ENCODE measurements at regions of chr6 and their contacts with region 1.

Region 1: GRCh38 chr6:134123666-134124208 is 71.3 kb upstream of the SLC2A12 start:
- DNase-seq: peak; percentile 75
- H3K4me3 ChIP-seq: no peak overlapping the region
- H3K27ac ChIP-seq: no peak overlapping the region
- H3K27me3 ChIP-seq: no peaks in the 10 kb centered on the region
- CTCF ChIP-seq: peak; percentile 63

Region 2: DNA sequence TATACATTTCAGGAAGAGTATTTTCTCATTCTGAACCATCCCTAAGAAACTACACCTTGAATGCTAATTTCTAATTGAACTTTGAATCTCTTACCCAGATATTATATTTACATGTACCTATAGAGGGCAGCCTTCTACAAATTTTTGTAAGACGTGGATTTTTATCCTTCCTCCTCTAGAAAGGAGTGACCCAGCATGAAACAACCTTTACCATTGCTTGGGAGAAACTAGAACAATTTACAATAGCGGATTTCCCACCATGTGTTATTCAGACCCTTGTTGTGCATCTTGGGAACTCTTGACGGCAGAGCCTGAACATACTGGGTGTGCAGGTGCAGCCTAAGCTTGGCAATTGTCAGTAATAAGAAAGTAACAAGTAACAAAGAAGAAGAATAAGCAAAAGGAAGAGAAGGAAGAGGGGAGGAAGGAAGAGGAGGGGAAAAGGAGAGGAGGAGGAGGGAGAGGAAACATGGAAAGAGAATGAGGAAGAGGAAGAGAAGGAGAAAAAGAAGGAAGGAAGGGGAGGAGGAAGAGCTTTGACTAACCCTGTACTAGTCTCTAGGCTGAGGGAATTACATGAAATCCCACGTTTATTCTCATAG is 1453.9 kb before region 1 on chr6:
- CTCF ChIA-PET with region 1: no interaction called
- POLR2A ChIA-PET with region 1: no interaction called
- DNase-seq: no peak
- H3K4me3 ChIP-seq: no peak overlapping the region
- H3K27ac ChIP-seq: no peak overlapping the region
- H3K27me3 ChIP-seq: no peaks in the 10 kb centered on the region
- CTCF ChIP-seq: peak; percentile 58

Region 3: GRCh38 chr6:133837801-133838349 is 285.9 kb before region 1 on chr6:
- CTCF ChIA-PET with region 1: no interaction called
- POLR2A ChIA-PET with region 1: no interaction called
- DNase-seq: no peak
- H3K4me3 ChIP-seq: no peak overlapping the region
- H3K27ac ChIP-seq: no peak overlapping the region
- H3K27me3 ChIP-seq: no peaks in the 10 kb centered on the region
- CTCF ChIP-seq: peak; percentile 41

Region 4: DNA sequence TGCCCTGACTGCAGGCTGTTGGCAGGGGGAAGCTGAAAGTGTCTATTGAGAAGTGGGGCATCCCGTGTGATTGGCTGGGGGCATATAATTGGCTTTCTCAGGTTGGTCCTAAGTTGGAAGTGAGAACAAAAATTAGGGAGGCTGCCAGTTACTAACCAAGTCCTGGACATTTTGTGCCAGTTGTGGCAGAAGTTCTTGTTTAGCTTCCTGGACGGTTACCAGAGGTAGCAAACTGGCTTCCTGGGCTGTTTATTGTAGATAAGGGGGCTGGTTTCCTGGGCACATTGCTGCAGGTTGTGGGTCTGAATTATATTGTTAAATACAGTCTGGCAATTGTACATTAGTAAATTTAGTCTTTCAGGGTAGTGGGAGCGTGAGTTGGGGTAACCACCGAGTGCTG is 20.7 kb before region 1 on chr6:
- CTCF ChIA-PET with region 1: interaction called, 70 read pairs
- POLR2A ChIA-PET with region 1: no interaction called
- DNase-seq: no peak
- H3K4me3 ChIP-seq: no peak overlapping the region
- H3K27ac ChIP-seq: no peak overlapping the region
- H3K27me3 ChIP-seq: no peaks in the 10 kb centered on the region
- CTCF ChIP-seq: no peak

Region 5: DNA sequence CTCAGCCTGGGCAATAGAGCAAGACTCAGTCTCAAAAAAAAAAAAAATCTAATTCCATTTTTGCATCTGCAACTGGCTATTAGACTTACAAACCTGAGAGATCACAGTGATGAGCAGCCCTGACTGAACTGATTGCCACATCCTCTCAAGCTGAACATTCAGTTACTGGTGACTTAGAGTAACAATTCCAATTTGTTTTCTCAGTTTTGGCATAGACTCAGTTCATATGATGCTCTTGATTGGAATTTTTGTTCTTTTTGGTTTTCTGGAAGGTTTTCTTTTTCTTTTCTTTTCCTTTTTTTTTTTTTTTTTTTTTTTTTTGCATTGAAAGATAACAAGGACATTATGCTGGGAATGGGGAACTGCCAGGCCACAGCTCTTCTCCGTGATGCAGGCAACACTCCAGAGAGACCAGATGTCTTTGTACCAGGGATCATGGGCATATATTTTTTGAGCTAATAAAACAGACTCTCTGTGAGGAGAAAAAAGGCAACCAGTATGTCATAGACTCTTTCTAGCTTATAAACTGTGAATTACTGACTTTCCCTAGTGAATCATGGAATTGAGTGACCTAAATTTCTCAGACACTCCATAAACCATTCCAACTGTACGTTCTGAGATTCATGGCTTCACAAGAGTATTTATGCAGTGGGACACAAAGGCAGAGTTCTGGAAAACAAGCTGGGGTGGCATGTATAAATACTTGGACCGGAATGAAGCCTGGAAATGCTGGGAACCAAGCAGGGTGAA is 14.7 kb after region 1 on chr6:
- CTCF ChIA-PET with region 1: interaction called, 52 read pairs
- POLR2A ChIA-PET with region 1: no interaction called
- DNase-seq: no peak
- H3K4me3 ChIP-seq: no peak overlapping the region
- H3K27ac ChIP-seq: peak overlapping the region; percentile 11
- H3K27me3 ChIP-seq: no peaks in the 10 kb centered on the region
- CTCF ChIP-seq: no peak

Region 6: DNA sequence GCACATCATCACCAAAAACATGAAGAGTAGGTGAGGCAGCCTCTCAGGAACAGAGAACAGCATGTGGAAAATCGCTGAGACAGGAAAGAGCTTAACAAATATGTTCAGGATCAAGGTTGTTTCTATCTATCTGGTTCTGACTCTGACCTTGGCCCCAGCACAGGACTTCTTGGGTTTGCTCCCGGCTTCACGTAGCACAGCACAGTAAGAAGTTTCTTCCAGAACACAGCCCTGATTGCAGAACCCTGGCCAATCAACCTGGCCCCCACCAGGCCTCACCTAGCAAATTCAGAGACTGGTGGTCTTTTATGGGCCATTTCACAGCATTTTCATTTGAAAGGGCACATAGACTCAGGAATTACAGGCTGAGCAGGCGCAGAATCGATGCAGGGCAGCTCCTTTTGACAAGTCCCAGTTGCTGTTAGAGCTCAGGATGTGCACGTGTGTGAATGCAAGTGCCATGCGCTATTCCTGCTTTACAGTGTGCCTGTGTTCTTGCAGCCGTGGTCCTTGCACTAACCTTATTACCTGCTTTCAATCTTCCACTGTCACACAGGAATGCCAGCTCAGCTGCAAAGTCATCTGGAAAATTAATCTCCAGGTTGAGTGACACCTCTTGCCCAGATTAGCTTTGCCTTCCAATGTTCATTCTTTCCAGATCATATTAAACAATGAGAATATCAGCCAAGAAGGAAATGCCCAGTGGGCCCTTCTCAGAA is 29.2 kb after region 1 on chr6:
- CTCF ChIA-PET with region 1: interaction called, 13 read pairs
- POLR2A ChIA-PET with region 1: no interaction called
- DNase-seq: no peak
- H3K4me3 ChIP-seq: no peak overlapping the region
- H3K27ac ChIP-seq: no peak overlapping the region
- H3K27me3 ChIP-seq: no peaks in the 10 kb centered on the region
- CTCF ChIP-seq: no peak

Region 7: DNA sequence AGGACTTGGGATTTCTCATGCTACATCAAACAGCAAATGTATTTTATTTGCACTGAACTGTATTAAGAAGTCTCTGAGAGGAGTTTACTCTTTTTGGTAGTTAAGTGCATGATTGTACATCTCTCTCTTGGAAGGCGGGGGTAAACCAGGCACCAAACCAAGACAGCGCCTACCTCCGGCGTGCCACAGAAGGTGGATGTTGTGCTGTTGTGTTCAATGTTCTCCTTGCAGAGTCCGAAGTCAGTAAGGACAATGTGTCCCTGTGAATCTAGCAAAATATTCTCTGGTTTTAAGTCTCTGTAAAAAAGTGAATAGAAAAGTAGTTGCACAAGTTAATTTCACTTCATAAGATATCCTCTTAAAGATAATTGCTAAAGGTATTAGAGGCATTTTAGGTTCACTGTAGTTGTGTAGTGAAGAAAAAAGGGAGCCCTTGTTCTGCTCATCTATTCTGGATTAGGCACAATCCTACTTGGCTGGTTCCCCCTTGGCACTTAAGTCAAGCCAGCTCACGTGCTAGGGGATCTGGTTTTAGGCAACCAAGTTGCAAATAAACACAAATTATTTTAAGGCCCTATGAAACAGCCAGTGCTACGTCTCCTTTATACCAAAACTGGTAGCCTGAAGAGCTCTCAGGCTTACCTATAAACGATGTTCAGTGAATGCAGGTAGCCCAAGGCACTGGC is 48.4 kb after region 1 on chr6:
- CTCF ChIA-PET with region 1: no interaction called
- POLR2A ChIA-PET with region 1: no interaction called
- DNase-seq: no peak
- H3K4me3 ChIP-seq: peak overlapping the region; percentile 94
- H3K27ac ChIP-seq: no peak overlapping the region
- H3K27me3 ChIP-seq: no peaks in the 10 kb centered on the region
- CTCF ChIP-seq: no peak

Region 8: DNA sequence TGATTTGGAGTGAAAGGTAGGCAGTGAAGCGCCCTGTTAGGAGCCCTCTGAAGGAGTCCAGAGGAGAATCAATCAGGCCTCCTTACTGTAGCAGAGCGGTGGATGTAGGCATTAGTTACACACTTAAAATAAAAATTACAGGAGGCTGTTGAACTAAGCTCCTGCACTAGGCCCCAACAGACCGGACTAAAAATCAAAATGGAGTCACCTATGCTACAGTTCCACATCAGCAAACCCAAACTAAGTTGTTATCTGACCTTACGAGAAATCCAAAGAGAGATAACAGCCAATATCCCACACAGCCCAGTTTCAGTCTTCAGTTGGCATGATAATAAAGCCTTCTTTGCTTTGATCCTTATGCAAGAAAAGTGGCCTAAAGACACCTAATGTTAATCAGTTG is 167.4 kb after region 1 on chr6:
- CTCF ChIA-PET with region 1: no interaction called
- POLR2A ChIA-PET with region 1: no interaction called
- DNase-seq: no peak
- H3K4me3 ChIP-seq: no peak overlapping the region
- H3K27ac ChIP-seq: no peak overlapping the region
- H3K27me3 ChIP-seq: no peaks in the 10 kb centered on the region
- CTCF ChIP-seq: no peak

Region 9: DNA sequence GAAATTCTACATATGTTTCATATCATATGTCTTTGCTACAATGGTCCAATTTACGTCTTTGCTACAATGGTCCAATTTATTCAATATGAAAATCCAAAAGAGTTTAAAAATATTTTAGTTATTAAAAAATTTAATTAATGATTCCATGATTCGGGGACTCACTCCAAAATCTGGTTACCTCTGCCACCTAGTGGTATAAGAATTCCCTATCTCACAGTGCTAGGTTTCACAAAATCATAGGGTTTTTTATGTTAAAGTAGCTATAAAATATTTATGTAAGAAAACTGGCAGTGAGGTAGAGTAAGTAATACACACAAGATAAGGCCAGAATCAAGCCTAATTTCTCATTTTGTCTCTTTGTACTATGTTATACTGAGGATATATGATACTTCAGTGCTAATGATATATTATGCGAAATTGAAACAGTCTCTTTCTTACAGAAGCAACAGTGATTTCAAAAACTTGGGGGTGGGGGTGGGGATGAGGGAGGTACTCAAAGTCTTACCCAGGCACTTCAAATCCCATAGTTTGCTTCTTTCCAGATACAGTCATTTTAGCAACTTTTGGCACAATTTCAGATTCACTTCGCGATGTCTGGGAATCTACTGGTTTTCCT is 878.6 kb after region 1 on chr6:
- CTCF ChIA-PET with region 1: interaction called, 10 read pairs
- POLR2A ChIA-PET with region 1: no interaction called
- DNase-seq: no peak
- H3K4me3 ChIP-seq: no peak overlapping the region
- H3K27ac ChIP-seq: no peak overlapping the region
- H3K27me3 ChIP-seq: no peaks in the 10 kb centered on the region
- CTCF ChIP-seq: peak; percentile 76